ENCODE measurements at regions of chr9 and their contacts with region 1.

Region 1: GRCh38 chr9:17900606-17901005 is 321.7 kb downstream of the SH3GL2 start:
- DNase-seq: no peak
- ATAC-seq: no peak
- H3K4me3 ChIP-seq: no peak overlapping the region
- H3K27ac ChIP-seq: no peak overlapping the region
- H3K4me1 ChIP-seq: no peaks in the 10 kb centered on the region
- H3K27me3 ChIP-seq: peaks cover 0 to 10% (median 6%) of the 10 kb centered on the region in 3 donors
- CTCF ChIP-seq: no peak

Region 2: GRCh38 chr9:17833845-17834244 is 66.8 kb before region 1 on chr9:
- intact Hi-C with region 1: loop called in 1 of 2 experiments (anchors 2 kb)
- DNase-seq: no peak
- ATAC-seq: no peak
- H3K4me3 ChIP-seq: no peak overlapping the region
- H3K27ac ChIP-seq: no peak overlapping the region
- H3K4me1 ChIP-seq: no peaks in the 10 kb centered on the region
- H3K27me3 ChIP-seq: no peaks in the 10 kb centered on the region
- CTCF ChIP-seq: no peak

Region 3: GRCh38 chr9:17986595-17986994 is 86.0 kb after region 1 on chr9:
- intact Hi-C with region 1: no loop called
- DNase-seq: no peak
- ATAC-seq: no peak
- H3K4me3 ChIP-seq: no peak overlapping the region
- H3K27ac ChIP-seq: no peak overlapping the region
- H3K4me1 ChIP-seq: no peaks in the 10 kb centered on the region
- H3K27me3 ChIP-seq: no peaks in the 10 kb centered on the region
- CTCF ChIP-seq: no peak

Measured in psoas muscle (tissue), 8 donors.